Transverse colon (tissue), 4 donors: ENCODE measurements at regions of chr2 and their contacts with region 1.

Region 1: DNA sequence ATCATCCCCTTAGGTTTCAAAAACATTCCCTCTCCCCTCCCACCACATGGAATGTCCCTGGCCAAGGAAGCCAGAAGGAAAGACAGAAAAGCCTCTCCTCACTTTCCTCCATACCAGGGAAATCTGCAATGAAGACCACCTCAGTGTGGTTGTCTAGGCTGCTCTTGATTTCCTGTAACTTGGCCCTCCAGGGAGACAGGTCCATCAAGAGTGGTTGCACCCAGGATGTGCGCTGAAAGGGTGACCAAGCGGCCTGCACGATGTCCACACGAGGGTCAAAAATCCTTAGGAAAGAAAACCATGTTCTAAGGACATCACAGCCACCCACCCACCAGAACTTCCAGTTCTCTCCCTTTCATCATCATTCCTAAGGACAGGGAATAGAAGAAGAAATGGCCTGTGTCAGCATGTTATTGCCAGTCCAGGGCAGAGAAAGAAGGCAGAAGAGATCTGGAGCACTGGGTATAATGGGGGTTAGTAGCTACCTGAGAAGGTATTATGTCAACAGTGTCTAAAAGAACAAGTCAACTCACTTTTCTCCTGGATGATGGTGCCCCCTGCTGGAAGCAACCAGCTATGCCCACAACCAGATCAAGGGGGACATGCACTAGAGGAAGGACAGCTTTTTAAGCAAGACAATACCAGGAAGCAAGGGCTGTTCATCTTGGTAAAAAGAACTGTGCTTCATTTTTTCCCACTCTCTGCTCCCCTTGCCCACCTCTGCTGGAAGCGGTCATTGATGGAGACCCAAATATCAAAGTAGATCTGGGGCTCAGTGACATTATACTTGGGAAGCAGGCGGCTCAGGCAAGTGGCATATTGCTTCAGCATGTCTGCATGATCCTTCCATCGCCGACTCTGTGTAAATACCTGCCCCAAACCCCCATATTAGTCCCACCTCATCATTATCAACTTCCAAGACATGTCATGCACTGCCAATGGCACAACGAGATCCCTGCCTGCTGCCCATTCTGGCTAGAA is 9.3 kb downstream of the GGCX start:
- DNase-seq: peak; percentile 91
- H3K4me3 ChIP-seq: no peak overlapping the region
- H3K27ac ChIP-seq: no peak overlapping the region
- H3K4me1 ChIP-seq: no peaks in the 10 kb centered on the region
- H3K27me3 ChIP-seq: no peaks in the 10 kb centered on the region
- CTCF ChIP-seq: peak; percentile 89 to 97 (median 90)
- EP300 ChIP-seq: no peak
- POLR2A ChIP-seq: no peak

Region 2: GRCh38 chr2:85420536-85421259 is 131.3 kb before region 1 on chr2:
- in situ Hi-C with region 1: loop called (anchors 5 kb)
- intact Hi-C with region 1: loop called (anchors 2 kb)
- DNase-seq: peak; percentile 93
- H3K4me3 ChIP-seq: no peak overlapping the region
- H3K27ac ChIP-seq: peak overlapping the region; percentile 92 to 94 (median 92)
- H3K4me1 ChIP-seq: peaks cover 20 to 42% (median 31%) of the 10 kb centered on the region in 4 donors
- H3K27me3 ChIP-seq: no peaks in the 10 kb centered on the region
- CTCF ChIP-seq: peak; percentile 100
- EP300 ChIP-seq: no peak
- POLR2A ChIP-seq: no peak